ENCODE measurements at regions of chr7 and their contacts with region 1.

Region 1: DNA sequence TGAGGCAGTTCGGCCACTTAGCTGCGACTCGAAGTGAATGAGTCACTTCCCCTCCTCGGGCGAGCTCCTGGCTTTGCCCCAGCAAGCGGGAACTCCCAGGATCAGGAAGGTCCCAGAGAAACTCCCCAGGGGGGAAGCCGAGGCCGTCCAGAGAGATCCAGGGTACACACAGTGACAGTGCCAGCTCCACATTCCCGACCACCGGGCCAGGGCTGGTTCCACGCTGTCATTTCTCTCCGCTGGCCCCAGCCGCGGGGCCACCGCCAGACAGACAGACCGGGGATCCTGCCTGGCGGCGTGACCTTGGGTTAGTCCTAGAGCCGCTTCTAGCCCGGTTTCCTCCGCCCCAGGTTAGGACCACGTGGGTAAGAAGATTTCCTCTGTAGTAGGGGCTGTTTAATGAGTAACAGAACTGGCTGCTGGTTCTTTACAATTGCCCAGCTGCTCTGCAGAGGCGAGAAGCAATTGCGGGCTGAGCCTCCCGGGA is 463 bp upstream of the UPP1 start:
- DNase-seq: no peak
- ATAC-seq: peak; percentile 71
- H3K4me3 ChIP-seq: peak overlapping the region; percentile 82
- H3K4me3 Mint-ChIP-seq: peak overlapping the region; percentile 100
- H3K27ac ChIP-seq: peak overlapping the region; percentile 80 to 83
- H3K27ac Mint-ChIP-seq: peak overlapping the region; percentile 96
- H3K4me1 ChIP-seq: peaks cover 82% of the 10 kb centered on the region
- H3K4me1 Mint-ChIP-seq: peaks cover 80% of the 10 kb centered on the region
- H3K27me3 ChIP-seq: no peaks in the 10 kb centered on the region
- H3K27me3 Mint-ChIP-seq: no peaks in the 10 kb centered on the region
- CTCF ChIP-seq: no peak

Region 2: GRCh38 chr7:47979145-47979831 is 109.3 kb before region 1 on chr7 and contains the start of gene HUS1:
- CTCF ChIA-PET with region 1: interaction called, 3 read pairs
- POLR2A ChIA-PET with region 1: interaction called, 6 read pairs
- intact Hi-C with region 1: loop called in 1 of 2 experiments (anchors 5 kb)
- DNase-seq: peak; percentile 85 to 96 (median 92)
- ATAC-seq: peak; percentile 98
- H3K4me3 ChIP-seq: peak within 1 kb of the TSS; percentile 83
- H3K4me3 Mint-ChIP-seq: peak within 1 kb of the TSS; percentile 92
- H3K27ac ChIP-seq: peak within 1 kb of the TSS; percentile 82 to 95
- H3K27ac Mint-ChIP-seq: peak within 1 kb of the TSS; percentile 92
- H3K4me1 ChIP-seq: peaks cover 22% of the 10 kb centered on the region
- H3K4me1 Mint-ChIP-seq: peaks cover 36% of the 10 kb centered on the region
- H3K27me3 ChIP-seq: no peaks in the 10 kb centered on the region
- H3K27me3 Mint-ChIP-seq: no peaks in the 10 kb centered on the region
- CTCF ChIP-seq: no peak
- total RNA-seq, gene HUS1: 77.8 to 83.1 TPM

Region 3: GRCh38 chr7:48035301-48035966 is 53.2 kb before region 1 on chr7 and contains the start of gene C7orf57:
- CTCF ChIA-PET with region 1: no interaction called
- POLR2A ChIA-PET with region 1: interaction called, 5 read pairs
- intact Hi-C with region 1: loop called (anchors 2 to 5 kb)
- DNase-seq: peak; percentile 75 to 92 (median 84)
- ATAC-seq: peak; percentile 96
- H3K4me3 ChIP-seq: peak within 1 kb of the TSS; percentile 62
- H3K4me3 Mint-ChIP-seq: peak within 1 kb of the TSS; percentile 83
- H3K27ac ChIP-seq: no peak within 1 kb of the TSS
- H3K27ac Mint-ChIP-seq: no peak within 1 kb of the TSS
- H3K4me1 ChIP-seq: peaks cover 15% of the 10 kb centered on the region
- H3K4me1 Mint-ChIP-seq: peaks cover 13% of the 10 kb centered on the region
- H3K27me3 ChIP-seq: peaks cover 3 to 13% of the 10 kb centered on the region in 2 experiments
- H3K27me3 Mint-ChIP-seq: peaks cover 57% of the 10 kb centered on the region
- CTCF ChIP-seq: peak; percentile 42
- total RNA-seq, gene C7orf57: 0.56 TPM in 1 of 2 experiments, not detected in the other

Region 4: DNA sequence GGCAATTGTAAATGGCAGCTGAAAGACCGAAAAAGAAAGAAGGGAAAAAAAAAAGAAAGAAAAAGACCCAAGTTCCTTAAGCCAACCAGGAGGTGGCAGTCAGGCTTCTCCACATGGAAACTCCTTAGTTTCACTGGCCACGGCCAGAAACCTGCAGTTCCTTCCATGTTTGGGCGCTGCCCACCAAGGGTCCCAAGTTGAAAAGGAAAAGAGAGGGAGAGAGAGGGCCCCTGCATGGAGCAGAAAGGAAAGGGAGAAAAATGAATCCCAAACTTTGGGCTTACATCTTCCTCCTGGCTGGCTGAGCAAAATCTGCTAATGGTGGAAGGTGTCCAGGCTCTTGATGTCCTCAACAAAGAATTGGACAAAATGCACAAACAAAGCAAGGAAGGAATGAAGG is 50.9 kb after region 1 on chr7:
- CTCF ChIA-PET with region 1: no interaction called
- POLR2A ChIA-PET with region 1: no interaction called
- intact Hi-C with region 1: no loop called
- DNase-seq: no peak
- ATAC-seq: no peak
- H3K4me3 ChIP-seq: no peak overlapping the region
- H3K4me3 Mint-ChIP-seq: no peak overlapping the region
- H3K27ac ChIP-seq: no peak overlapping the region
- H3K27ac Mint-ChIP-seq: no peak overlapping the region
- H3K4me1 ChIP-seq: no peaks in the 10 kb centered on the region
- H3K4me1 Mint-ChIP-seq: peaks cover 4% of the 10 kb centered on the region
- H3K27me3 ChIP-seq: no peaks in the 10 kb centered on the region
- H3K27me3 Mint-ChIP-seq: peaks cover 5% of the 10 kb centered on the region
- CTCF ChIP-seq: no peak

Measured in CD4-positive, alpha-beta T cell (primary cell).